ENCODE measurements at regions of chr4 and their contacts with region 1.

Region 1: DNA sequence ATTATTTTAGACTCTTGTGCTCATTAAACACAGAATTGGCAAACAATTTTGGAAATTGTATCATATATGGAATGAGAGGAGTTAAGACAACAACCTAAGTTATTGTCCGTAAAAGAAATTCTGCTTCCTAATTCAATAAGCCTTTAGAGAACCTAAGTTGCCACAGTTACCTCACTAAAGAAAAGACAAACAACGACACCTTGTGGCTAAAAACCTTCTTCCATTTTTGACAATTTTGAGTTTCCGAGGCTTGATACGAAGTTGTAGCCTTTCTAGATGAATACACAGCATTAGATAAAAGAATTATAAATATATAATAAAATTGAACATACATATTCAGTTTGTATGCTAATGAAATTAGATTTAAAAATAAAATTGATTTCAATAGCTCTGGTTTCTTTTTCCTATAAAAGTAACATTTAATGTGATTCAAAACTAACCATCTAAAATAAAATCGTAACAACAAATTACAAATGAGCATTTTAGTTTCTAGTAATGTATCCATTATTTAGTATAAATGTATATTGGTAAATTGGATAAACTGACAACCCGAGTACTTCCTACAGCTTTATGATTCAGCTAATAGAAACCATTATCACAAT is 275.1 kb downstream of the GPM6A start:
- DNase-seq: peak in 1 of 2 experiments; percentile 35
- H3K4me3 ChIP-seq: no peak overlapping the region
- H3K27ac ChIP-seq: no peak overlapping the region
- H3K4me1 ChIP-seq: no peaks in the 10 kb centered on the region
- H3K27me3 ChIP-seq: no peaks in the 10 kb centered on the region
- CTCF ChIP-seq: peak; percentile 67

Region 2: GRCh38 chr4:174365018-174365587 is 1171.8 kb before region 1 on chr4:
- CTCF ChIA-PET with region 1: no interaction called
- POLR2A ChIA-PET with region 1: no interaction called
- intact Hi-C with region 1: loop called (anchors 2 kb)
- DNase-seq: peak in 1 of 2 experiments; percentile 20
- H3K4me3 ChIP-seq: no peak overlapping the region
- H3K27ac ChIP-seq: no peak overlapping the region
- H3K4me1 ChIP-seq: no peaks in the 10 kb centered on the region
- H3K27me3 ChIP-seq: no peaks in the 10 kb centered on the region
- CTCF ChIP-seq: peak; percentile 70

Region 3: DNA sequence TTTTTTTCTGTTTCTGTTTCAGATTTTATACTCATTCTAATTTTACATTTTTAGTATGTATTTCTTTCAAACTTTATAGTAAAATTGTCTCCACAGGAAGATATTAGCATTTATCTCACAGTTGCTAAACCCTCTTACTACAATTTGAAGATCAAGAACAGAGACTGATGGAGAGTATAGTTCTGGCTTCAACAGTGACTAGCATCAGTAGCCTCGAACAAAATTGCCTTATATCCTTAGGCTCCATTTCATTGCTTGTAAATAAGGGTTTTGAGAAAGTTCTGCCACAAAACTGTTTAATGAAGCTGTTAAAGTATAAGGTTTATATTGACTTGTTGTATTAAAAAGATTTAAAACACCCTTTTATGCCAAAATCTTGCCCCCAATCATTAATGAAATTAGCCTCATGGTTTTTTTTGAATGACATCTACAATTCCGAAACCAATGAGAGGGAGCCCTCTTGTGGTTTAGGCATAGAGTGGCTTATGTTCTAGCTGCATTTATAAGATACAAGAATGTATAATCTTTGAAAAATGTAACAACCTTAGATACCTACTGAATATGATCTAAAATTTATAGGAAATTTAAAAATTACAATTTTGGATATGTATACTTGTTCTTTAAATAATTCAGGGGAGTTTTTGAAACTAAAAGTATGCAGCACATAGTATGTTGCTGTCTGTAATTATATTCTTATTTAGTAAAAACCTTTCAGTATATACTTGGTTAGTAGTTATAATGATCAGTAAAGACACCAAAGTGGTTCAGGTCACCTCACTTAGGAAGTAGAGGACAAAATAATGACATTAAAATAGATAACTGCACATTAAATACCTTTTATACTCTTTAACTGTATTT is 904.8 kb before region 1 on chr4:
- CTCF ChIA-PET with region 1: no interaction called
- POLR2A ChIA-PET with region 1: no interaction called
- intact Hi-C with region 1: loop called (anchors 5 kb)
- DNase-seq: no peak
- H3K4me3 ChIP-seq: no peak overlapping the region
- H3K27ac ChIP-seq: no peak overlapping the region
- H3K4me1 ChIP-seq: no peaks in the 10 kb centered on the region
- H3K27me3 ChIP-seq: no peaks in the 10 kb centered on the region
- CTCF ChIP-seq: peak; percentile 70

Region 4: DNA sequence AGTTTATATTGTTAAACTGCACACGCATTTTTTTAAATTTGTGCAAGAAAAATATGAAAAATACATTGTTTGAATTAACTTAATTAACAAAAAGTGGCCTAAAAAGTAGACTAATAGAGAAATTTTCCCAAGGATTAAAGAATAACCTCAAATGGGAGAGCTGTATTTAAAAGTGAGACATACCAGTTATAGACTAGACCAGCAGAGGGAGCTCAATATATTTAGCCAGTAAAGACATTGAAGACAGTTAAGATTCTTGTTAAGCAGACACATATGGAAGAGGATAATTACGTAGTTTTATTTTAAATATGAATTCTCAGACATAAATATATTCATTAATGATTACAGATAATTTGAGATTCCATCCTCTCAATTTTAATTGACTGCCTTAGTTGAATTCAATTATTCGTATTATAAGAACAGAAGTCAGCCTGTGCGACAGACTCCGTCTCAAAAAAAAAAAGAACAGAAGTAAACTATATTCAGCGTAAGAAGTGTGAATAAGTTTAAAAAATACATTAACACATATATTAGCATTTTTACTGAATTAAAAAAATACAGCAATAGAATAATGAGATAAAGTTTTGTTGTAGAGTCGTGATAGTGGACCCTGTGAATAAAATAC is 772.7 kb before region 1 on chr4:
- CTCF ChIA-PET with region 1: no interaction called
- POLR2A ChIA-PET with region 1: no interaction called
- intact Hi-C with region 1: loop called (anchors 1 kb)
- DNase-seq: no peak
- H3K4me3 ChIP-seq: no peak overlapping the region
- H3K27ac ChIP-seq: no peak overlapping the region
- H3K4me1 ChIP-seq: no peaks in the 10 kb centered on the region
- H3K27me3 ChIP-seq: no peaks in the 10 kb centered on the region
- CTCF ChIP-seq: peak; percentile 70

Region 5: DNA sequence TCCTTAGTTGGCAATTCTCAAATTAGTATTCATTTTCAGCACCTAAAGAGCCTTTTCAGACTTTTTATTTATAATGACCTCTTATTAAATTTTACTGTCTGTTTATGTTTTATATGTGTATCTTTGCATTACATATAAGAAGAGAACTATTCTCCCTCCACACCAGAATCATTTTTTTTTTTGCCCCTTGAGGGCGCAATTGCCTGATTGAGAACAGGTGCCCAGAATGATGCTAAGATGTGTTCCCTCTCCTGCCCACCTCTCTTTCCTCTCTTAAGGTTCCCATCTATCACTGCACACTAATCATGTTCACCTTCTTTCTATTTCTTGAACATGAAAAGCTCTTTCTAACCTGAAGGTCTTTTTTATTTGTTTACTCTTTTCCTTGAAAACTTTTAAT is 663.0 kb before region 1 on chr4:
- CTCF ChIA-PET with region 1: no interaction called
- POLR2A ChIA-PET with region 1: no interaction called
- intact Hi-C with region 1: loop called (anchors 1 kb)
- DNase-seq: peak in 1 of 2 experiments; percentile 31
- H3K4me3 ChIP-seq: no peak overlapping the region
- H3K27ac ChIP-seq: no peak overlapping the region
- H3K4me1 ChIP-seq: no peaks in the 10 kb centered on the region
- H3K27me3 ChIP-seq: no peaks in the 10 kb centered on the region
- CTCF ChIP-seq: peak; percentile 60

Region 6: GRCh38 chr4:175282407-175282806 is 254.5 kb before region 1 on chr4:
- CTCF ChIA-PET with region 1: no interaction called
- POLR2A ChIA-PET with region 1: no interaction called
- intact Hi-C with region 1: no loop called
- DNase-seq: no peak
- H3K4me3 ChIP-seq: no peak overlapping the region
- H3K27ac ChIP-seq: no peak overlapping the region
- H3K4me1 ChIP-seq: no peaks in the 10 kb centered on the region
- H3K27me3 ChIP-seq: no peaks in the 10 kb centered on the region
- CTCF ChIP-seq: no peak

Region 7: GRCh38 chr4:175657571-175657970 is 120.6 kb after region 1 on chr4:
- CTCF ChIA-PET with region 1: no interaction called
- POLR2A ChIA-PET with region 1: no interaction called
- intact Hi-C with region 1: no loop called
- DNase-seq: no peak
- H3K4me3 ChIP-seq: no peak overlapping the region
- H3K27ac ChIP-seq: no peak overlapping the region
- H3K4me1 ChIP-seq: no peaks in the 10 kb centered on the region
- H3K27me3 ChIP-seq: no peaks in the 10 kb centered on the region
- CTCF ChIP-seq: no peak